ENCODE measurements at regions of chr1 and their contacts with region 1.

Region 1: DNA sequence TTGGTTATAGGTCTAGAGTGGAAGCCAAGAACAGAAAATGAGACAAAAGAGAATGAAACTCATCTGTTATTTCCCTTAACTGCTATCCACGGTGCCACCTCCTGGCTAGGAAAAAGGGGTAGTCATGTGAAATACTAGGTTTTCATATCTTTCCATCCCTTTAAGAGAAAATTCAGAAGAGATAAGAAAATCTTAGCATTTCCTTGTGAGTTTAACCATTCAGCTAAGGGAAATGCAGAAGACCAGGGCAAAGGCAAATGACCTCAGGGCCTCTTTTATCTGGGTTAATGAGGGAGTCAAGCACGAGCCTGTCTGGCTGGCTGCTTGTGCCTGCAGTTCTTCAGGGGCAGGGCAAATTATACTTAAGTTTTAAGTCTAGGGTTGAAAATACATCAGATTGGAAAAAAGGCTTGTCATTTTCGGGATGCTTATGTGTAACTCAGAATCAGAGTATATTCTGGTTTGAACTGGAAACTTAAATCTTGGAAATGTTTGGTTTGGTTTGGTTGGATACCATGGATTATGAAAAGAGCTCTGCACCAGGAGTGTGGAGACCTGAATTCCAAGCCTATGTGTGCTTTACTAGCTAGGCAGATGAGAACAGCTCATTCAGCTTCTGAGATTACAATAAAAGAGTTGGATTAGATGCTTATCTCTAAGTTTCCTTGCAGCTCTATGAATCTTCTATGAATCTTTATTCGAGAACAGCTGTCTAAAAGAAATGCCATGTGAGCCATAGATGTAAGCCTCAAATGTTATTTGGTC is 19.9 kb downstream of the NIBAN1 start:
- DNase-seq: no peak
- H3K4me3 ChIP-seq: peak overlapping the region; percentile 7 to 11
- H3K27ac ChIP-seq: peak overlapping the region; percentile 75 to 82
- H3K4me1 ChIP-seq: peaks cover 2 to 38% of the 10 kb centered on the region in 2 donors
- H3K27me3 ChIP-seq: no peaks in the 10 kb centered on the region
- CTCF ChIP-seq: peak in 1 of 3 experiments; percentile 11

Region 2: DNA sequence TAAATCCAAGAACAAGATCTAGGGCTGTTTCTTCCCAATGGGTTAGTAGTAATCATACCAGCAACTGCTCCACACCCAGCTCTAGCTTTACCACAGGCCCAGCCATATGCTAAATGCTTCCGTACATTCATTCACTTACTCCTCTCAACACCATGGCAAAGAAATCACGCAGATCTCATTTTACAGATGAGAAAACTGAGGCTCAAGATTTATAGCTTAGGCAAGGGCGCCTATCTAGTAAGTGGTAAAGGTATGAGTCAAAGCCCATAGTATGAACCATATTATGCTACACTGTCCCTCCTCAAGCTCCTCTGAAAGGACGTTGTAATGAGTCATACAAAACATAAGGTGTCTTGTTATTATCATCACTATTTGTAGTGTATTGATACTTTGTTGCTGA is 62.3 kb before region 1 on chr1:
- intact Hi-C with region 1: loop called (anchors 5 kb)
- DNase-seq: no peak
- H3K4me3 ChIP-seq: no peak overlapping the region
- H3K27ac ChIP-seq: peak overlapping the region; percentile 86 to 93
- H3K4me1 ChIP-seq: peaks cover 4 to 56% of the 10 kb centered on the region in 2 donors
- H3K27me3 ChIP-seq: no peaks in the 10 kb centered on the region
- CTCF ChIP-seq: no peak

Region 3: GRCh38 chr1:184905474-184905894 is 48.9 kb before region 1 on chr1:
- intact Hi-C with region 1: no loop called
- DNase-seq: no peak
- H3K4me3 ChIP-seq: no peak overlapping the region
- H3K27ac ChIP-seq: peak overlapping the region; percentile 35 to 66
- H3K4me1 ChIP-seq: peaks cover 0 to 64% of the 10 kb centered on the region in 2 donors
- H3K27me3 ChIP-seq: no peaks in the 10 kb centered on the region
- CTCF ChIP-seq: no peak

Region 4: GRCh38 chr1:185017326-185017725 is 62.9 kb after region 1 on chr1:
- intact Hi-C with region 1: no loop called
- DNase-seq: no peak
- H3K4me3 ChIP-seq: no peak overlapping the region
- H3K27ac ChIP-seq: no peak overlapping the region
- H3K4me1 ChIP-seq: no peaks in the 10 kb centered on the region
- H3K27me3 ChIP-seq: no peaks in the 10 kb centered on the region
- CTCF ChIP-seq: no peak

Region 5: DNA sequence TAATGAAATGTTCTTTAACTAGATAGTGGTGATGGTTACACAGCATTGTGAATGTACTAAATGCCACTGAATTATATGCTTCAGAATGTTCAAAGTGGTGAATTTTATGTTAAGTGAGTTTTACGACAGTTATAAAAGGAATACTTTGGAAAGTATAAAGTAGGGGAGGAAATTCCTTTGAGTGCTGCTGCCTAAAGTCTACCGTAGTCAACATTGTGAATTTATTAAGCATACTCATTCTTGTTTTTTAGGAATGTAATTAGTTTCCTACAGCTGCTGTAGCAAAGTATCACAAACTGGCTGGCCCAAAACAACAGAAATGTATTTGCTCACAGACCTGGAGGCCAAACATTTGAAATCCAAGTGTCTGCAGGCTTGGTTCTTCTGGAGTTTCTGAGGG is 275.6 kb after region 1 on chr1:
- intact Hi-C with region 1: no loop called
- DNase-seq: no peak
- H3K4me3 ChIP-seq: no peak overlapping the region
- H3K27ac ChIP-seq: no peak overlapping the region
- H3K4me1 ChIP-seq: no peaks in the 10 kb centered on the region
- H3K27me3 ChIP-seq: no peaks in the 10 kb centered on the region
- CTCF ChIP-seq: no peak